ENCODE measurements at regions of chr2 and their contacts with region 1.

Region 1: GRCh38 chr2:111883661-111884591 is at the start of gene ANAPC1:
- DNase-seq: peak; percentile 88
- H3K4me3 Mint-ChIP-seq: peak within 1 kb of the TSS; percentile 98
- H3K27ac Mint-ChIP-seq: peak within 1 kb of the TSS; percentile 92
- H3K4me1 Mint-ChIP-seq: peaks cover 16% of the 10 kb centered on the region
- H3K27me3 Mint-ChIP-seq: no peaks in the 10 kb centered on the region
- total RNA-seq, gene ANAPC1: 92.5 to 104 TPM

Region 2: DNA sequence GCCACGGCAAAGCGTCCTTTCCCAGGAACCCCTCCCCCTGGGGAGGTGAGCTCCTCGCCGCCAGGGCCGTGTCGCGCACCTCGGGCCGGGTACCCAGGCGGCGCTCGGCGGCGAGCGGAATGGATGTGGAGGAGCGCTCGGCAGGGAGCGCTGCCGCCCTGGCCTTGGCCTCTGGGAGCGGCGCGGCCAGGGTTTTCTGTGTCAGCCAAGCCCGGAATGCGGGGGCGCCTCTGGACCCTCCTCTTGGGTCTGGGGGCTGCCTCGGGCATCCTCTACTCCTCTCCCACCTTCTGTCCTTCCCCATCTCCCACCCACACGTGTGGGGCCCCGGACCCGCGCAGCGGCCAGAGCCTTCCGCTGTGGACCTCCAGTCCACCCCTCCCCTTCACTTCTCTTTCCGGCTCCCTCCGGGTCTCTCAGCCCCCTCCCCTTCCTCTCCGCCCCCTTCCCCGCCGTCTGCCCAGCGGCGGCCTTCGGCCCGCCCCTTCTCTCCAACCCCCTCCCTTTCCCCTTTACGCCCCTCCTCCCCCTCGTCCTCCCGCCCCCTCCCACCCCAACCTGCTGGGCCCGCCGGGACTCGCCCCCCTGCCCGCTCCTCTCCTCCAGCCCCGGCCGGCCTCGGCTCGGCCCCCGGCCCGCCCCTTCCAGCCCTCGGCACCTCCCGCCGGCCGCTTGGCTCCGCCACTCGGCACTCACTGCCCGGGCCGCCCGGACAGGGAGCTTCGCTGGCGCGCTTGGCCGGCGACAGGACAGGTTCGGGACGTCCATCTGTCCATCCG is 14.2 kb after region 1 on chr2 and contains the start of gene MERTK:
- CTCF ChIA-PET with region 1: interaction called, 11 read pairs
- intact Hi-C with region 1: loop called (anchors 1 kb)
- DNase-seq: peak; percentile 72
- H3K4me3 Mint-ChIP-seq: peak within 1 kb of the TSS; percentile 76
- H3K27ac Mint-ChIP-seq: no peak within 1 kb of the TSS
- H3K4me1 Mint-ChIP-seq: peaks cover 9% of the 10 kb centered on the region
- H3K27me3 Mint-ChIP-seq: peaks cover 18% of the 10 kb centered on the region
- total RNA-seq, gene MERTK: 0.57 to 0.88 TPM

Region 3: GRCh38 chr2:112001136-112001715 is 117.3 kb after region 1 on chr2:
- CTCF ChIA-PET with region 1: no interaction called
- intact Hi-C with region 1: no loop called
- DNase-seq: no peak
- H3K4me3 Mint-ChIP-seq: no peak overlapping the region
- H3K27ac Mint-ChIP-seq: no peak overlapping the region
- H3K4me1 Mint-ChIP-seq: peaks cover 9% of the 10 kb centered on the region
- H3K27me3 Mint-ChIP-seq: no peaks in the 10 kb centered on the region

Region 4: GRCh38 chr2:112054847-112055729 is 171.2 kb after region 1 on chr2 and contains the start of gene TMEM87B:
- CTCF ChIA-PET with region 1: interaction called, 23 read pairs
- intact Hi-C with region 1: loop called (anchors 2 kb)
- DNase-seq: peak; percentile 99
- H3K4me3 Mint-ChIP-seq: peak within 1 kb of the TSS; percentile 97
- H3K27ac Mint-ChIP-seq: peak within 1 kb of the TSS; percentile 99
- H3K4me1 Mint-ChIP-seq: peaks cover 42% of the 10 kb centered on the region
- H3K27me3 Mint-ChIP-seq: no peaks in the 10 kb centered on the region
- total RNA-seq, gene TMEM87B: 10.5 to 12.0 TPM

Region 5: DNA sequence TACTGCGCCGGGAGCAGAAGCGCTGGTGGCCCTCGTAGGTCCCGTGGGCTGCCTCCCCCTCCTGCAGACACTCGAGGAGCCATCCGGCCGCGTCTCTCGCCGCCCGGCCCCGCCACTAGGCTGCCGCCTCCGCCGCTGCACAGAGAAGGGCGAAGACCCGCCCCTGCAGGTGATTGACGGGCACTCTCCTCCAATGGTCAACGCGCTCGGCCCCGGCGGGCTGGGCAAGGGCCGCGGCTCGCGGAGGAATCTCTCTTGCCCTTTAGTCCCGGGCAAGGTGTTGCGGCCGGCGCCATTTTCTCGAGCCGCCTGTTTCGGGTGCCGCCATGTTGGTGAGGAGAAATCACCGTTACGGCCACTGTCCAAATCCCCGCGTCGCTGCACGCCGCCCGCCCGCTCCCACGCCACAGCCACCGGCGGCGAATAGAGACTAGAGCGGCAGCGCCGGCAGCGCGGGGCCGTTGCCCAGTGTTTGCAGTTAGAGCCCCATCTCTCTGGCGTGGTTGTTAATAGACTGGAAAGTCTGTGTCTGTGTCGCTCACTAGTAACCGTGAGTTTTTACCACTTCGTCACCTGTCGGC is 391.5 kb after region 1 on chr2 and contains the start of gene ZC3H6:
- CTCF ChIA-PET with region 1: no interaction called
- intact Hi-C with region 1: loop called (anchors 5 kb)
- DNase-seq: peak; percentile 99
- H3K4me3 Mint-ChIP-seq: peak within 1 kb of the TSS; percentile 93
- H3K27ac Mint-ChIP-seq: peak within 1 kb of the TSS; percentile 97
- H3K4me1 Mint-ChIP-seq: peaks cover 24% of the 10 kb centered on the region
- H3K27me3 Mint-ChIP-seq: no peaks in the 10 kb centered on the region
- total RNA-seq, gene ZC3H6: 18.5 to 18.7 TPM

Region 6: GRCh38 chr2:112481050-112481527 is 597.2 kb after region 1 on chr2:
- CTCF ChIA-PET with region 1: no interaction called
- intact Hi-C with region 1: loop called (anchors 2 kb)
- DNase-seq: peak; percentile 91
- H3K4me3 Mint-ChIP-seq: peak overlapping the region; percentile 95
- H3K27ac Mint-ChIP-seq: peak overlapping the region; percentile 81
- H3K4me1 Mint-ChIP-seq: peaks cover 28% of the 10 kb centered on the region
- H3K27me3 Mint-ChIP-seq: no peaks in the 10 kb centered on the region